CD14-positive monocyte (primary cell): ENCODE measurements at regions of chr17 and their contacts with region 1.

Region 1: GRCh38 chr17:19295473-19296135 is 58.4 kb downstream of the EPN2 start:
- DNase-seq: peak; percentile 14 to 63 (median 58)
- H3K4me3 ChIP-seq: no peak overlapping the region
- H3K4me3 Mint-ChIP-seq: peak overlapping the region in 1 of 2 donors; percentile 59
- H3K27ac ChIP-seq: no peak overlapping the region
- H3K27ac Mint-ChIP-seq: peak overlapping the region in 2 of 7 donors; percentile 10 to 50
- H3K4me1 ChIP-seq: peaks cover 4 to 8% of the 10 kb centered on the region in 2 donors
- H3K4me1 Mint-ChIP-seq: peaks cover 15% of the 10 kb centered on the region
- H3K27me3 ChIP-seq: peaks cover 28 to 74% of the 10 kb centered on the region in 2 donors
- H3K27me3 Mint-ChIP-seq: peaks cover 77 to 85% (median 82%) of the 10 kb centered on the region in 3 donors
- CTCF ChIP-seq: no peak

Region 2: GRCh38 chr17:19338031-19338990 is 42.7 kb after region 1 on chr17:
- intact Hi-C with region 1: loop called in 1 of 2 experiments (anchors 5 kb)
- DNase-seq: peak; percentile 61 to 73 (median 67)
- H3K4me3 ChIP-seq: no peak overlapping the region
- H3K4me3 Mint-ChIP-seq: no peak overlapping the region
- H3K27ac ChIP-seq: no peak overlapping the region
- H3K27ac Mint-ChIP-seq: no peak overlapping the region
- H3K4me1 ChIP-seq: no peaks in the 10 kb centered on the region
- H3K4me1 Mint-ChIP-seq: no peaks in the 10 kb centered on the region
- H3K27me3 ChIP-seq: peaks cover 0 to 36% of the 10 kb centered on the region in 2 donors
- H3K27me3 Mint-ChIP-seq: peaks cover 20 to 54% (median 27%) of the 10 kb centered on the region in 3 donors
- CTCF ChIP-seq: peak; percentile 90